WTC11 (cell line): ENCODE measurements at regions of chr5 and their contacts with region 1.

Region 1: GRCh38 chr5:95892780-95893354 is 68.8 kb downstream of the ELL2 start:
- DNase-seq: peak; percentile 62
- ATAC-seq: peak; percentile 82
- H3K4me3 Mint-ChIP-seq: no peak overlapping the region
- H3K27ac Mint-ChIP-seq: no peak overlapping the region
- H3K4me1 Mint-ChIP-seq: peaks cover 28% of the 10 kb centered on the region
- H3K27me3 Mint-ChIP-seq: no peaks in the 10 kb centered on the region
- CTCF ChIP-seq: peak; percentile 20; the same call in 1 of the 2 replicates

Region 2: GRCh38 chr5:95686651-95687050 is 206.2 kb before region 1 on chr5:
- CTCF ChIA-PET with region 1: no interaction called
- POLR2A ChIA-PET with region 1: no interaction called
- DNase-seq: no peak
- ATAC-seq: no peak
- H3K4me3 Mint-ChIP-seq: no peak overlapping the region
- H3K27ac Mint-ChIP-seq: no peak overlapping the region
- H3K4me1 Mint-ChIP-seq: no peaks in the 10 kb centered on the region; the same call in 1 of the 2 replicates
- H3K27me3 Mint-ChIP-seq: no peaks in the 10 kb centered on the region
- CTCF ChIP-seq: no peak

Region 3: GRCh38 chr5:95940758-95941682 is 48.2 kb after region 1 on chr5:
- CTCF ChIA-PET with region 1: interaction called, 11 read pairs
- POLR2A ChIA-PET with region 1: interaction called, 5 read pairs
- DNase-seq: peak; percentile 26
- ATAC-seq: peak; percentile 90
- H3K4me3 Mint-ChIP-seq: peak overlapping the region; percentile 31
- H3K27ac Mint-ChIP-seq: peak overlapping the region; percentile 87
- H3K4me1 Mint-ChIP-seq: peaks cover 36% of the 10 kb centered on the region
- H3K27me3 Mint-ChIP-seq: no peaks in the 10 kb centered on the region
- CTCF ChIP-seq: no peak

Region 4: GRCh38 chr5:96026406-96027041 is 133.7 kb after region 1 on chr5:
- CTCF ChIA-PET with region 1: no interaction called
- POLR2A ChIA-PET with region 1: no interaction called
- DNase-seq: no peak
- ATAC-seq: no peak
- H3K4me3 Mint-ChIP-seq: no peak overlapping the region
- H3K27ac Mint-ChIP-seq: no peak overlapping the region
- H3K4me1 Mint-ChIP-seq: no peaks in the 10 kb centered on the region
- H3K27me3 Mint-ChIP-seq: no peaks in the 10 kb centered on the region
- CTCF ChIP-seq: no peak

Region 5: GRCh38 chr5:96336351-96336985 is 443.6 kb after region 1 on chr5:
- CTCF ChIA-PET with region 1: interaction called, 20 read pairs
- POLR2A ChIA-PET with region 1: no interaction called
- DNase-seq: peak; percentile 58
- ATAC-seq: peak; percentile 86
- H3K4me3 Mint-ChIP-seq: no peak overlapping the region
- H3K27ac Mint-ChIP-seq: no peak overlapping the region
- H3K4me1 Mint-ChIP-seq: peaks cover 14% of the 10 kb centered on the region
- H3K27me3 Mint-ChIP-seq: no peaks in the 10 kb centered on the region
- CTCF ChIP-seq: peak; percentile 70